ENCODE measurements at regions of chr5 and their contacts with region 1.

Region 1: GRCh38 chr5:157142317-157143126 is at the start of gene MED7:
- DNase-seq: peak; percentile 96
- H3K4me3 Mint-ChIP-seq: peak within 1 kb of the TSS; percentile 90
- H3K27ac Mint-ChIP-seq: peak within 1 kb of the TSS; percentile 98
- H3K4me1 Mint-ChIP-seq: peaks cover 43% of the 10 kb centered on the region
- H3K27me3 Mint-ChIP-seq: no peaks in the 10 kb centered on the region
- total RNA-seq, gene MED7: 16.8 to 17.7 TPM

Region 2: GRCh38 chr5:156920042-156920860 is 222.3 kb before region 1 on chr5:
- CTCF ChIA-PET with region 1: interaction called, 4 read pairs
- POLR2A ChIA-PET with region 1: interaction called, 20 read pairs
- DNase-seq: peak; percentile 59
- H3K4me3 Mint-ChIP-seq: peak overlapping the region; percentile 30
- H3K27ac Mint-ChIP-seq: peak overlapping the region; percentile 65
- H3K4me1 Mint-ChIP-seq: peaks cover 49% of the 10 kb centered on the region
- H3K27me3 Mint-ChIP-seq: no peaks in the 10 kb centered on the region

Region 3: GRCh38 chr5:157108976-157109375 is 33.5 kb before region 1 on chr5 and contains the start of gene HAVCR2:
- CTCF ChIA-PET with region 1: interaction called, 9 read pairs
- POLR2A ChIA-PET with region 1: interaction called, 74 read pairs
- DNase-seq: peak; percentile 82
- H3K4me3 Mint-ChIP-seq: peak within 1 kb of the TSS; percentile 88
- H3K27ac Mint-ChIP-seq: peak within 1 kb of the TSS; percentile 96
- H3K4me1 Mint-ChIP-seq: peaks cover 70% of the 10 kb centered on the region
- H3K27me3 Mint-ChIP-seq: no peaks in the 10 kb centered on the region
- total RNA-seq, gene HAVCR2: 62.4 to 66.9 TPM

Region 4: GRCh38 chr5:157167214-157167621 is 24.7 kb after region 1 on chr5:
- CTCF ChIA-PET with region 1: interaction called, 4 read pairs
- POLR2A ChIA-PET with region 1: interaction called, 16 read pairs
- DNase-seq: peak; percentile 24
- H3K4me3 Mint-ChIP-seq: peak overlapping the region; percentile 46
- H3K27ac Mint-ChIP-seq: peak overlapping the region; percentile 77
- H3K4me1 Mint-ChIP-seq: peaks cover 72% of the 10 kb centered on the region
- H3K27me3 Mint-ChIP-seq: no peaks in the 10 kb centered on the region

Region 5: DNA sequence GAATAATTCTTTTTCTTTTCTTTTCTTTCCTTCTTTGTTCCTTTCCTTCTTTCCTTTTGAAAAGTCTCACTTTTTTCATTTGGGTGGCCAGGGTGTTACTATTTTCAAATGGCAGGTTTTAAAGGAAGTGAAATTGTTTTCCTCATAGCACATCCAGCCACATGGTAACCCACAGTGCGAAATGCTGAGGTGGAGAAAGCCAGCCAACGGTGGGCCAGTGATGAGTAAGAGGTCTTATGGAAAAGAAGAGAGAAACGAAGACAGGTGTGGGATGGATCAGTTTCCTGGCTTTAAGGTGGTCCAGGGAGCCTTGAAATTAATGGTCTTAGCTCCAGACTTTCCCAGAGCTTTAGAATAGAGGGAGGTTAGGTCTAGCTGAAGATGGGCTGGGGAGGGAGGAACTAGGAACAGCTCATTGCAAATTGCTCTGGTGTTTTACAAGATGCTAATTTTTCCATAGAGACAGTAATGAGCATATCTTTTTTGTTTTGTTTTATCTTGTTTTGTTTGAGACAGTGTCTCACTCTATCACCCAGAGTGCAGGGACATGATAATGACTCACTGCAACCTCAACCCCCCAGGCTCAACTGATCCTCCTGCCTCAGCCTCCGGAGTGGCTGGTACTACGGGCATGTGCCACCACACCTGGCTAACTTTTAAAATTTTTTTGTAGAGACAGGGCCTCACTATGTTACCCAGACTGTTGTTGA is 55.9 kb after region 1 on chr5:
- CTCF ChIA-PET with region 1: no interaction called
- POLR2A ChIA-PET with region 1: interaction called, 18 read pairs
- DNase-seq: peak; percentile 58
- H3K4me3 Mint-ChIP-seq: peak overlapping the region; percentile 55
- H3K27ac Mint-ChIP-seq: peak overlapping the region; percentile 89
- H3K4me1 Mint-ChIP-seq: peaks cover 94% of the 10 kb centered on the region
- H3K27me3 Mint-ChIP-seq: no peaks in the 10 kb centered on the region

Region 6: GRCh38 chr5:157245477-157245876 is 103.0 kb after region 1 on chr5:
- CTCF ChIA-PET with region 1: interaction called, 12 read pairs
- POLR2A ChIA-PET with region 1: interaction called, 11 read pairs
- DNase-seq: no peak
- H3K4me3 Mint-ChIP-seq: no peak overlapping the region
- H3K27ac Mint-ChIP-seq: peak overlapping the region; percentile 98
- H3K4me1 Mint-ChIP-seq: peaks cover 75% of the 10 kb centered on the region
- H3K27me3 Mint-ChIP-seq: no peaks in the 10 kb centered on the region

Measured in activated CD4-positive, alpha-beta memory T cell treated with anti-CD3 and anti-CD28 coated beads, Interleukin-2, amount 10 ng/mL, durations not matched to agents 7 days and 5 days (primary cell).